Endothelial cell of umbilical vein (primary cell): ENCODE measurements at regions of chr10 and their contacts with region 1.

Region 1: GRCh38 chr10:94308866-94309265 is 53.9 kb downstream of the NOC3L start:
- DNase-seq: peak; percentile 87
- H3K4me3 ChIP-seq: no peak overlapping the region
- H3K27ac ChIP-seq: no peak overlapping the region
- H3K4me1 ChIP-seq: peaks cover 12% of the 10 kb centered on the region
- H3K27me3 ChIP-seq: peaks cover 0 to 2% of the 10 kb centered on the region in 2 experiments
- CTCF ChIP-seq: no peak
- POLR2A ChIP-seq: no peak

Region 2: GRCh38 chr10:94292434-94293090 is 16.3 kb before region 1 on chr10:
- CTCF ChIA-PET with region 1: interaction called, 8 read pairs
- POLR2A ChIA-PET with region 1: no interaction called
- dilution Hi-C with region 1: no loop called
- intact Hi-C with region 1: loop called (anchors 2 kb)
- DNase-seq: peak; percentile 60
- H3K4me3 ChIP-seq: no peak overlapping the region
- H3K27ac ChIP-seq: no peak overlapping the region
- H3K4me1 ChIP-seq: no peaks in the 10 kb centered on the region
- H3K27me3 ChIP-seq: no peaks in the 10 kb centered on the region
- CTCF ChIP-seq: no peak
- POLR2A ChIP-seq: no peak